Calu3 (cell line): ENCODE measurements at regions of chr4 and their contacts with region 1.

Region 1: DNA sequence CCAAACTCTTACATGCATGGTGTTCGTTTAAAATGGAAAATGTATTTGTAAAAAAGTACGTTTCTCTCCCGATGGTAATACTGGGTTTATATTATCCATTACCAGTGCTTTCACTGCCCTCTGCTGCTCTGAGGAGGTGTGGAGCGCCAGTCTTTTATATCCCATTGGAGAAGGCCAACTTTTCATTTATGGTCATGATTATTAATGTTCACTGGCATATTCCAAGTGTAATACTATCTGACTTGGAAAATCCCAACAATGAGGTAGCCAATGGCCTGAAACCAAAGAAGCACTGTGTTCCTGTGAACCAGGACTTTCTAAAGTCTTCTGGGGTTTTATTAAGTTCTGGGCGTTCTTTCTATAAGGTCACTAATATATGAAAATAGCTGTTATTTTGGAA is 80.7 kb downstream of the SYNPO2 start:
- DNase-seq: peak; percentile 37
- H3K4me3 Mint-ChIP-seq: no peak overlapping the region
- H3K27ac Mint-ChIP-seq: no peak overlapping the region
- H3K4me1 Mint-ChIP-seq: peaks cover 19% of the 10 kb centered on the region
- H3K27me3 Mint-ChIP-seq: no peaks in the 10 kb centered on the region
- CTCF ChIP-seq: no peak

Region 2: GRCh38 chr4:118740869-118741268 is 228.5 kb before region 1 on chr4:
- CTCF ChIA-PET with region 1: no interaction called
- intact Hi-C with region 1: loop called (anchors 1 kb)
- DNase-seq: no peak
- H3K4me3 Mint-ChIP-seq: no peak overlapping the region
- H3K27ac Mint-ChIP-seq: no peak overlapping the region
- H3K4me1 Mint-ChIP-seq: no peaks in the 10 kb centered on the region
- H3K27me3 Mint-ChIP-seq: no peaks in the 10 kb centered on the region
- CTCF ChIP-seq: peak; percentile 4

Region 3: DNA sequence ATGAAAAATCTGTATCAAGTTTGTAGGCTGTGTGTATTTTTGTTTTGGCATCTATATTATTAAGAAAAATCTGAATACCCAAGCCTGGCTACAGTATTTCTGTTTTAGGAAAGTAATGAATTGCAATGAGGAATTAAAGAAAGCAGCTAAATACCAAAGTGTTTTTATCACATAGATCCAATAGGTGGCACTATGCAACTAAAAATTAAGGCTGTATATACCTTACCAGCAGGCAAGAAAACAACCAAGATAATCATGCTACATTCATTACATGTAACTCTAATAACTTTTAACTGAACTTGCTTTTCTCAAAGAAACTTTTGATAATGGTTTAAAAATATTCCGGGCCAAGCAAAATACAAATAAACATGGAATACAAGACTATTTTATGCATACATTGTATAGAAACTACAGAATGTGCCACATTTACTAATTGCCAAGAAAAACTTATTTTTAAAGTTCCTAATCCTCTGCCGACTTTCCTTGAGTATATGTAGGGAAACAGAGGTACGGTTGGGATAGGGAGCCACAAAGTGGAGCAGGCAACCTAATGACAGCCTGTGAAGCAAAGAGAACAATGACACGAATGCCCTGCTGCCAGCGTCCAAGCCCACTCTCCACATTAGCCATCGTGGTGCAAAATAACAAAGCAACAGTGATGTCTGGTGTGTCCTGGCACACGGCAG is 197.1 kb before region 1 on chr4:
- CTCF ChIA-PET with region 1: interaction called, 5 read pairs
- intact Hi-C with region 1: loop called (anchors 1 kb)
- DNase-seq: no peak
- H3K4me3 Mint-ChIP-seq: no peak overlapping the region
- H3K27ac Mint-ChIP-seq: no peak overlapping the region
- H3K4me1 Mint-ChIP-seq: peaks cover 13% of the 10 kb centered on the region
- H3K27me3 Mint-ChIP-seq: no peaks in the 10 kb centered on the region
- CTCF ChIP-seq: no peak

Region 4: DNA sequence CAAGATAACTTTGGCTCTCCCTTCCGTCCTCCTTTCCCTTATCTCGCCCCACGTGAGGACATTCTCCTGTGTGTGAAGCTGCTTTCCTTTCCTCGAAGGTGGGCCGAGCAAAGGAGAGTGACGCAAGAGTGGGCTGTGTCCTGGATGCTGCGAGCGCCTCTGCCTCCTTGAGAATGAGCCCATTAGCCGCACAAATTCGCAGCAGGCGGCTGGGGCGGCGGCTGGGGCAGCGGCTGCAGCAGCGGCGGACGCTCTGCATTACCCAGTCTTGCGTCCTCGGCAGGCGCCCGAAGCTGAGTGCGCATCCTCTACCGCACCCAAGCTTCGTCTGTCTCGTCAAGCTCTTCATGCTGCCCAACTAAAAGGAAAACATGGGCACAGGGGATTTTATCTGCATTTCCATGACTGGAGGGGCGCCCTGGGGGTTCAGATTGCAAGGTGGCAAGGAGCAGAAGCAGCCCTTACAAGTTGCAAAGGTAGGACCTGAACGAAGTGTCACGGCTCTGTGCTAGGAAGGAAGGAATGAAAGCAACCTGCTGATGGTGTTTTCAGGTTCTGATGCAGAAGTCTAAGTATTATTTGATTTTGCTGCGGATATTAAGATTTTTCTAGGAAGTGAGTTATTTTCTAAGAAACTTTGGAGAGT is 80.6 kb before region 1 on chr4 and contains the start of gene SYNPO2:
- CTCF ChIA-PET with region 1: no interaction called
- intact Hi-C with region 1: loop called (anchors 1 kb)
- DNase-seq: peak; percentile 31
- H3K4me3 Mint-ChIP-seq: peak within 1 kb of the TSS; percentile 76
- H3K27ac Mint-ChIP-seq: no peak within 1 kb of the TSS
- H3K4me1 Mint-ChIP-seq: peaks cover 13% of the 10 kb centered on the region
- H3K27me3 Mint-ChIP-seq: no peaks in the 10 kb centered on the region
- CTCF ChIP-seq: no peak
- total RNA-seq, gene SYNPO2: 0.17 and 0.39 TPM in 2 replicates